ENCODE measurements at regions of chrX and their contacts with region 1.

Region 1: DNA sequence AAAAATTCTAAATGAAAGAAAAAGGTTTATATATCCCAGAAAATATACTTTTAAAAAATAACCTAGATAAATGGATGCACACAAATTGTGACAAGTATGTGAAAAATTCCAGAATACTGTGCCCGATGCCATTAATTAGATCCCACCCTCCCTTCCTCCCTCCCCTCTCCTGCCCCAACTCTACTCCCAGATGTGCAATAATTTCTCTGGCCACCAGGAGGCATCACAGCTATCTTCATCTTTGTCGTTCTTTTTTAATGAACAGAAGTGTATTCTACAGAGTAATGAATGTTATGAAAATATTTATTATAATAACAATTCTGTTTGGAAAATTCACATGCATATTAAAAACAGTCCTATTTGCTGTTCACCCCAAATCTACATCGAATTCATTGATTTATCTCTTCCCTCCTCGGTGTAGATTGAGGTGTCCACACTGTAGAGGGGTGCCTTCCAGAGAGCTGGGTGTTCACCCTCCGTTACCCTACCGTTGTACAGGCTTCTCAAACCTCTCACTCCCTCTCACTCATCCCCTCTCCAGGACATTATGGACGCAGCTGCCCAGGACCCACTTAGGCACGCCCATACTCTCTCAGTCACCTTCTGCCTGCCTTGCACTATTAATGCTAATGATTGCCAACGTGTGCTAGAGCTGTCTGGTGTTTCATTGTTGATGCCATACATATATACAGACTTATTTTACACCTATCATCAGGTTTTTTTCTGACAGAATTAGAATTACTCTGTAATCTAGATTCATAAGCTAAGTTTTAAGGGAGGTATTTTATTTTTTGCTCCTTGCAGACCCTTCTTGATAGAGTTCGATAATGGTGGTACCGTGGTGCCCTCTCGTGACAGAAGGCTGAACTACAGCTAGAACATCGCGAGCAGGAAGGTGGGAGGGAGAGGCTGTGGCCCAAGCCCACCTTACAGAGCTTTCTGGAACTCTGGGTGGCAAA is 14.1 kb downstream of the RAB40AL start:
- DNase-seq: peak; percentile 74
- H3K4me3 ChIP-seq: peak overlapping the region; percentile 34
- H3K27ac ChIP-seq: no peak overlapping the region
- H3K4me1 ChIP-seq: no peaks in the 10 kb centered on the region
- H3K27me3 ChIP-seq: no peaks in the 10 kb centered on the region
- CTCF ChIP-seq: peak; percentile 74

Region 2: GRCh38 chrX:102085706-102086105 is 865.5 kb before region 1 on chrX:
- CTCF ChIA-PET with region 1: interaction called, 16 read pairs
- POLR2A ChIA-PET with region 1: no interaction called
- intact Hi-C with region 1: no loop called
- DNase-seq: peak; percentile 25
- H3K4me3 ChIP-seq: no peak overlapping the region
- H3K27ac ChIP-seq: no peak overlapping the region
- H3K4me1 ChIP-seq: no peaks in the 10 kb centered on the region
- H3K27me3 ChIP-seq: no peaks in the 10 kb centered on the region
- CTCF ChIP-seq: peak; percentile 35; the same call in 1 of the 2 replicates

Region 3: DNA sequence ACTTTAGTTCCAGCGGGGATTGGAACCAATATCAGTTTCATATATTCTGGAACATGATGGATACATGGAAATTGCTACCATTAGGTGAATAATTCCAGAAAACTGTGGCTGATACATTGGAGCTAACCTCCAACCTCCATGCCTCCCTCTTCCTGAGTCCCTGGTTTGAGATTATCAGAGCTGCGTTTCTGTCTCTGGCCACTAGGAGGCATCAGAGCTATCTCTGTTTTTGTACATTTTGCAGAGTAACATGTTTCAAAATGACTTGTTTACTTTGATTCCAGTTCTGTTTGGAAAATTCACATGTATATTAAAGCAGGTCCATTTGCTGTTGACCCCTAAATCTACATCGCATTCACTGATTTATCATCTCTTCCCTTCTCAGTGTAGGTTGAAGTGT is 16.6 kb before region 1 on chrX:
- CTCF ChIA-PET with region 1: interaction called, 10 read pairs
- POLR2A ChIA-PET with region 1: no interaction called
- intact Hi-C with region 1: no loop called
- DNase-seq: peak; percentile 56
- H3K4me3 ChIP-seq: no peak overlapping the region
- H3K27ac ChIP-seq: no peak overlapping the region
- H3K4me1 ChIP-seq: no peaks in the 10 kb centered on the region
- H3K27me3 ChIP-seq: no peaks in the 10 kb centered on the region
- CTCF ChIP-seq: peak; percentile 87

Region 4: DNA sequence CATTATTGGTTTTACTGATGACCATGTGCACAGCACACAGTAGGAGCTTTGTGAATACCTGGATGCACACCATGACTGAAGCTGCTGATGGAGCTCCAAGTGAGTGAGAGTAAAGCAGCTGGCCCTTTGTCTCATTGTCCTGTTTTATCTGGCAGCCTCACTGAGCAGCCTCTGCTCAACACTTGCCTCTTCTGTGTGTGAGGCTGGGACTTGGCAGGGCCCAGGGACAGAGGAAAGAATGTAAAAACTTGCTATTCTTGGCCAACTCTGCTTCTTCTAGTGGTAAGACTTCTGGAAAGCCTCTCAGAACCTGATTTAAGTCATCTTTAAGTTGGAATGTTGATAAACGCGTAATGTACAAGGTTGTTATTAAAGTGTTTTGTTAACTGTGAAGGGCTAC is 51.4 kb after region 1 on chrX:
- CTCF ChIA-PET with region 1: interaction called, 15 read pairs
- POLR2A ChIA-PET with region 1: no interaction called
- intact Hi-C with region 1: no loop called
- DNase-seq: no peak
- H3K4me3 ChIP-seq: no peak overlapping the region
- H3K27ac ChIP-seq: no peak overlapping the region
- H3K4me1 ChIP-seq: no peaks in the 10 kb centered on the region
- H3K27me3 ChIP-seq: no peaks in the 10 kb centered on the region
- CTCF ChIP-seq: no peak

Region 5: DNA sequence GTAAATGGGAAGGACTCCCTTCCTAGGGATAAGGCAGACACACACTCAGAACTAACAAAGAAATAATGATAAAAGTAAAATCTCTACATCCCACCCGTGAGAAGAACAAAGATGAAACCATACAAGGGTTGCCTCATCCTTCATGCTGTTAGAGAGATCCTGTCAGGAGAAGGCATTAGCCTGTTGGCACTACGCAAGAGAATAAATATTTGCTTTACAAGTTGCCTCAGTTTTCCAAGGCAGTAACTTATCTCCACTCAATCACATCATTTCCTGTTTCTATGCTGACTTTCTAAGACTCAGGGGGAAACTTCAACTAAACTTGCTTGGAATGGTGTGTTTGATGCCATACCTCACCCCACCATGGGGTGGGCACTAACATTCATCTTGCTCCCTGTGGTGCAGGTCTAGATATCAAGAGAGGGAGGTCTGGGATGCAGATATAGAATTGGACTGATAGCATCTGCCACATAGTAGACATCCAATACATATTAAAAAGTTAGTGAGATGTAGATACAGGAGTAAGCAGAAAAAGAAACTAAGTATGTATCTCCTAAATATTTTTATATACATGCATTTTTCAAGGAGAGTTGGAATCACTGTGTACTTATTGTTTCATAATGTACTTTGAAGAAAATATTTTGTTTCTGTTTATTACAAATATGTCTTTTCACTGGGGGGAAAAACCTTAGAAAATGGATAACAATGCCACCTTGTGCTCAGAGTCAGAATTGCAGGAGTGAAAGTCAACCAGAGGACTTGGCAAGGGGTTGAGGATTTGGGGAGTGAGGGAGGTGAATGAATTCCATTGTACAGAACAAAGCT is 206.5 kb after region 1 on chrX:
- CTCF ChIA-PET with region 1: interaction called, 3 read pairs
- POLR2A ChIA-PET with region 1: no interaction called
- intact Hi-C with region 1: loop called (anchors 2 kb)
- DNase-seq: peak; percentile 74
- H3K4me3 ChIP-seq: no peak overlapping the region
- H3K27ac ChIP-seq: peak overlapping the region; percentile 55
- H3K4me1 ChIP-seq: peaks cover 9% of the 10 kb centered on the region
- H3K27me3 ChIP-seq: no peaks in the 10 kb centered on the region
- CTCF ChIP-seq: peak; percentile 83

Region 6: GRCh38 chrX:103175944-103176753 is 225.0 kb after region 1 on chrX:
- CTCF ChIA-PET with region 1: interaction called, 9 read pairs
- POLR2A ChIA-PET with region 1: no interaction called
- intact Hi-C with region 1: loop called (anchors 2 kb)
- DNase-seq: peak; percentile 66
- H3K4me3 ChIP-seq: peak overlapping the region; percentile 35
- H3K27ac ChIP-seq: no peak overlapping the region
- H3K4me1 ChIP-seq: no peaks in the 10 kb centered on the region
- H3K27me3 ChIP-seq: no peaks in the 10 kb centered on the region
- CTCF ChIP-seq: peak; percentile 90

Region 7: DNA sequence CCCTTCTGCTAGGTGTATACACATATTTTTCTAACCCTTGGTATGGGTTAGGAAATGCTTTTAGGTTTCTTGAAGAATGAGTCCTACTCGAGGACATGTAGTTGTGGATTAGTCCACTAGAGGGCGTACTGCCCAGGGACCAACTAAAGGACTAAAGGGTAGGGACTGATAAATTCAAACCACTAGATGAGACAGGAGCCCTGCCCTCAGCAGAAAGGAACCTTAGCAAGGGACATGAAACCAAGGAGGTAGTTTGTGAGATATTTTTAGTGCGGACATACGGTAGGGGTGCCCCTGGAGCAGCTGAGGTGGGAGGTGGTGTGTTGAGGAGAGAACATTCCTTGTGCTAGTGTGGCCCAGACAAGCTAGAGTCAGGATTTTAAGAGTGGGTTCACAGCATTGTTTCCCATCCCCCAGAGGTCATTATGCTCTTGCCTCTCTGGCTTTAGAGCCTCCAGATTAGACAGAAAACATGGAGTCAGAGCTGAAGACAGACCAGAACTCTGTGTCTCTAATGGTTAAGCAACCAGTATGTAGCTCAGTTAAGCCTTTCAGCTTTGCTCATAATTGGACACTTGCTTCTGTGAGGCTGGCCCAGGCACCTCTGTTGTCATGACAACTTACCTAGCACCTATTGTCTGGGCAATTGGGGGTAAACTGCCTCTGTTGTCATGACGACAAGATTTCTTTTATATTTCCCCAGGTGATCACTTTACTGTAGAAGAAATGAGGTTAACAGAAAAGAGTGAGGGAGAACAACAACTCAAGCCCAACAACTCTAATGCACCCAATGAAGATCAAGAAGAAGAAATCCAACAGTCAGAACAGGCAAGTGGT is 760.6 kb after region 1 on chrX:
- CTCF ChIA-PET with region 1: no interaction called
- POLR2A ChIA-PET with region 1: no interaction called
- intact Hi-C with region 1: no loop called
- DNase-seq: peak; percentile 69
- H3K4me3 ChIP-seq: no peak overlapping the region
- H3K27ac ChIP-seq: no peak overlapping the region
- H3K4me1 ChIP-seq: no peaks in the 10 kb centered on the region
- H3K27me3 ChIP-seq: no peaks in the 10 kb centered on the region
- CTCF ChIP-seq: peak; percentile 75

Measured in A673 (cell line).